Mucosa of descending colon (tissue), 3 donors: ENCODE measurements at regions of chr15 and their contacts with region 1.

Region 1: GRCh38 chr15:81274931-81275707 is 48.8 kb downstream of the STARD5 start:
- DNase-seq: peak; percentile 74 to 85 (median 79)
- ATAC-seq: peak; percentile 98
- H3K4me3 ChIP-seq: no peak overlapping the region
- H3K4me1 ChIP-seq: peaks cover 10% of the 10 kb centered on the region
- CTCF ChIP-seq: peak; percentile 81

Region 2: GRCh38 chr15:81336568-81336967 is 61.4 kb after region 1 on chr15:
- intact Hi-C with region 1: loop called in 1 of 2 experiments (anchors 10 kb)
- DNase-seq: peak in 1 of 3 donors; percentile 52
- ATAC-seq: peak; percentile 24
- H3K4me3 ChIP-seq: no peak overlapping the region
- H3K4me1 ChIP-seq: peaks cover 6% of the 10 kb centered on the region
- CTCF ChIP-seq: no peak

Region 3: GRCh38 chr15:81357223-81357622 is 82.1 kb after region 1 on chr15:
- intact Hi-C with region 1: no loop called
- DNase-seq: no peak
- ATAC-seq: no peak
- H3K4me3 ChIP-seq: no peak overlapping the region
- H3K4me1 ChIP-seq: no peaks in the 10 kb centered on the region
- CTCF ChIP-seq: no peak

Region 4: DNA sequence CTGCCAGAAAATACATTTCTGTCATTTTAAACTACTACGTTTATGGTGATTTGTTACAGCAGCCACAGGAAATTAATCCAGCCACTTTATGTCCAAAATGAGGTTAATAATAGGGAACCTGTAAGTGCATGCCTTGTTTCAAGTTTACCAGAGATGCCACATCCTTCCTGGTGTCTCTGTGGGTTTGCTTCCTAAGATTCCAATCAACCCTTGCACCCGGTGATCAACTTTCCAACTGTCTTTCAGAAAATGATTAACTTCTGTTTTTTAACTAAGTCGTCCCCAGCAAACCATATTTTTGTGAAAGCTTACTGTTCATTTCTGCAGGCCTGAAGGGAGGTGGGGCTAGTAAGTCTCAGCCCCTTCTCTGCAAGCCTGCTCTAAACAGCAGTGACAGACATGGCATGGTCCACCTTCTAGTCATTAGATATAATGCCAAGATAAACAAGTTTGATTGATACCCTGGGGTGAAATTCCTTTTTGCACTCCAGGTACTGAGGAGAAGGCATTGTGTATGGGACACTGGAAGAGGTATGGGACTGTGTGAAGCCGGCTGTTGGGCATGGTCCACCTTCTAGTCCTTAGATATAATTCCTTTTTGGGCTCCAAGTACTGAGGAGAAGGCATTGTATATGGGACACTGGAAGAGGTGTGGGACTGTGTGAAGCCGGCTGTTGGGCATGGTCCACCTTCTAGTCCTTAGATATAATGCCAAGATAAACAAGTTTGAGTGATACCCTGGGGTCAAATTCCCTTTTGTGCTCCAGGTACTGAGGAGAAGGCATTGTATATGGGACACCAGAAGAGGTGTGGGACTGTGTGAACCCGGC is 110.0 kb after region 1 on chr15:
- intact Hi-C with region 1: no loop called
- DNase-seq: peak in 1 of 3 donors; percentile 57
- ATAC-seq: peak; percentile 85
- H3K4me3 ChIP-seq: no peak overlapping the region
- H3K4me1 ChIP-seq: peaks cover 29% of the 10 kb centered on the region
- CTCF ChIP-seq: no peak

Region 5: GRCh38 chr15:81400640-81401236 is 125.6 kb after region 1 on chr15:
- intact Hi-C with region 1: loop called (anchors 2 to 5 kb)
- DNase-seq: peak in 1 of 3 donors; percentile 64
- ATAC-seq: peak; percentile 77
- H3K4me3 ChIP-seq: no peak overlapping the region
- H3K4me1 ChIP-seq: no peaks in the 10 kb centered on the region
- CTCF ChIP-seq: peak; percentile 74

Region 6: DNA sequence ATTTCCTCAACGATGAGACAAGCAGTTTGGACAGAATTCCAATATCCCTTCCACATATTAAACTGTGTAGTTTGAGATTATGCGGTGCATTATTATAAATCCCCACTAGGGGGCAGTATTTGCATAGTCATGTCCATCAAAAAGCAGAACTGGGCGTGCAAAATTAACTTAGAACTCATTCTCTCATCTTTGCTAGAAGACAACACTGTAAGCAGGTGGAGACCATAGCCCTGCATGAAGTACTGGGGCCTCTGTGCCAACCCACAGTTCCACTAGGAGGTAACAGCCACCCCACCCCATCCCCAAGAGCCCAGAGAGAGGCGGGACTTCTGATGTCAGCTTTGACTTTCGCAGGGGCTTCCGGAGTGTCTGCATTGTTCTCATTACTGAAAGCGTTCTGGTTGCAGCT is 205.5 kb after region 1 on chr15:
- intact Hi-C with region 1: no loop called
- DNase-seq: peak in 1 of 3 donors; percentile 79
- ATAC-seq: peak; percentile 74
- H3K4me3 ChIP-seq: no peak overlapping the region
- H3K4me1 ChIP-seq: no peaks in the 10 kb centered on the region
- CTCF ChIP-seq: peak; percentile 75

Region 7: DNA sequence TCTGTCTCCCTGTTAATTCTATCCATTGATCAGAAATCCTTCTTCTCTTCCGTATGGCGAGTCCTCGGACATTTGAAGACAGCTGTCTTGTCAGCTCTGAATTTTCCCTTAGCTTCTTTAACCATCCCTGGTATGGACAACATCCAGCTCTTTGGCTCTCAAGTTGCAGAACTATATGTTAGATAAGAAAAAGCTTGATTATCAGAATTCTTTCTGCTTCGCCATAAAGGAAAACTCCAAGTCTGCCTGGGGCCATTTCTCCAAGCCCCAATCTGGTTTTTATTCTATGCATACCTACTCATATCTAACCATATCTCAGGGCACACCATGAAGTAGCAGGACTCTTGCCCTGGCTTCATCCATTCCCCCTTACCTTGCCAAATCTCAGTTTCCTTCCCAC is 314.6 kb after region 1 on chr15:
- intact Hi-C with region 1: no loop called
- DNase-seq: no peak
- ATAC-seq: no peak
- H3K4me3 ChIP-seq: no peak overlapping the region
- H3K4me1 ChIP-seq: no peaks in the 10 kb centered on the region
- CTCF ChIP-seq: no peak